ENCODE measurements at regions of chr12 and their contacts with region 1.

Region 1: DNA sequence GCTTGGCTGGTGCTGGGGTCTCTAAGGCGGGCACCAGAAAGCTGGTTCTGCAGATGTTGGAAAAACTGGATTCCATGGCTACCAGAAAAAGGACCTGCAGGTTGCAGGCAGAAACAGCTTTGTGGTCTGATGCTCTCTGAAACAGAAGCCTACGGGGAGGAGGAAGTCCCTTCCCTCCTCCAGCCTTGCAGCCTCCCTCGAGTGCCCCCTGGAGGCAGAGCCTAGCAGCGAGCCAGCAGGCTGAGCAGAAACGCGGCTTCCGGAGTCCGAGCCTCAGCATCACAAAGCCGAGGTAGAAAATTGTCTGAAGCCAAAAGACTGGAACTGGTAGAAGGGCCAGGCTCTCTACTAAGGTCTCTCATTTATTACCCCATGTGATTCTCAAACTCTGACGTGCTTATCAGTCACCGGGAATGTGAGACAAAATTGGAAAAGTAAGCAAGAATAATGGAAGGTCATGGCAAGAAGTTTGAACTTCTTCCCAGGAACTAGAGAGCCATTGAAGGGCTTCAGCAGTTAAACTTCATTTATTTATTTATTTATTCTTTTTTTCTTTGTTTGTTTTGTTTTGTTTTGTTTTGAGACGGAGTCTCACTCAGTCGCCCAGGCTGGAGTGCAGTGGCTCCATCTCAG is 82.2 kb upstream of the CPSF6 start:
- DNase-seq: peak; percentile 21 to 87
- H3K4me3 ChIP-seq: no peak overlapping the region
- H3K27ac ChIP-seq: no peak overlapping the region
- H3K4me1 ChIP-seq: peaks cover 0 to 4% of the 10 kb centered on the region in 2 donors
- H3K27me3 ChIP-seq: peaks cover 3% of the 10 kb centered on the region
- CTCF ChIP-seq: peak; percentile 34 to 81 (median 76)

Region 2: DNA sequence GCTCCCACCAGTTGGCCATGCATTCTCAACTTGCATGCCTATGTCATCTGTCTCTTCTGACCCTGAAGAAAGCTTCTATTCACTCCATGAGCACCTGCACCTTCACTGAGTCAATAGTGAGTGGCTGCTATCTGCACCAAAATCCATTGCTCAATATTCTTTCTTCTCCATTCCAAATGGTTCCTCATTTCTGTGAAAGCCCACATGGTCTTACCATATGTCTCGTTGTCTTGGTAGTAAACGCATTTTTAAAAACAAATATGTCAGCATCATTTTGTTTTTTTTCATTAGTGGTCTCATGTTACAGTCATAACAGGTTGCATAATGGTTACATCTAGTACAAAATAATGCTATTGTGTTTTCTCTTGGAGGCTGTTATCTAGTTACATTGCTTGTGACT is 117.2 kb before region 1 on chr12:
- intact Hi-C with region 1: no loop called
- DNase-seq: no peak
- H3K4me3 ChIP-seq: no peak overlapping the region
- H3K27ac ChIP-seq: no peak overlapping the region
- H3K4me1 ChIP-seq: no peaks in the 10 kb centered on the region
- H3K27me3 ChIP-seq: no peaks in the 10 kb centered on the region
- CTCF ChIP-seq: no peak

Region 3: DNA sequence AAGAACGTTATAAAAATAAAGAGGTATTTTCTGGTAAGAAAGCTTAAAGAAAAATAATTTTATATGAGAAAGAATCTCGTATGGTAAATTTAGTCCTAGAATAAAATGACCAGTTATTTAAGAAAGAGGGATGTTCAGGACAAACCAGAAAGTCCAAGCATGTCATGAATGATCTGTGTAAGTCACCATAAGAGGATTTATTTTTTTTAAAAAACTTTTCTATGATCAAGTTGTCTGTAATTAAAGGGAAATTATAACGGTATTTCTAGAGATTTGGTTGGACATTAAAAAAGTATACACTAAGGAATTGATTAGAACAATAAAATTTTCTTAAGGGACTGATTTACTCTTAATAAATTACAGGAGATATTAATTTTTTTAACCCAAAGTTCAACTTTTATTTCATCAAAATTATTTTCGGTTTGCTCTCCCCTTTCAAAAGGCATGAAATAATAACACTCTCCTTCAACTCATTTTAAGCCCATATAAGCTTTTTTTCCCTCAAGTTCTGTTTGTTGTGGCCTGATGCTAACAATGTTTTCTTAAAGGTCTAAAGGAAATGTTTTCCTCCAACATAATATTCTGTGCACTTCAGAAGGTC is 32.3 kb after region 1 on chr12:
- intact Hi-C with region 1: no loop called
- DNase-seq: no peak
- H3K4me3 ChIP-seq: no peak overlapping the region
- H3K27ac ChIP-seq: no peak overlapping the region
- H3K4me1 ChIP-seq: no peaks in the 10 kb centered on the region
- H3K27me3 ChIP-seq: no peaks in the 10 kb centered on the region
- CTCF ChIP-seq: no peak

Region 4: GRCh38 chr12:69254046-69254445 is 96.9 kb after region 1 on chr12:
- intact Hi-C with region 1: loop called (anchors 1 kb)
- DNase-seq: no peak
- H3K4me3 ChIP-seq: no peak overlapping the region
- H3K27ac ChIP-seq: no peak overlapping the region
- H3K4me1 ChIP-seq: peaks cover 0 to 3% of the 10 kb centered on the region in 2 donors
- H3K27me3 ChIP-seq: no peaks in the 10 kb centered on the region
- CTCF ChIP-seq: peak; percentile 33 to 51 (median 44)